ENCODE measurements at regions of chr5 and their contacts with region 1.

Region 1: DNA sequence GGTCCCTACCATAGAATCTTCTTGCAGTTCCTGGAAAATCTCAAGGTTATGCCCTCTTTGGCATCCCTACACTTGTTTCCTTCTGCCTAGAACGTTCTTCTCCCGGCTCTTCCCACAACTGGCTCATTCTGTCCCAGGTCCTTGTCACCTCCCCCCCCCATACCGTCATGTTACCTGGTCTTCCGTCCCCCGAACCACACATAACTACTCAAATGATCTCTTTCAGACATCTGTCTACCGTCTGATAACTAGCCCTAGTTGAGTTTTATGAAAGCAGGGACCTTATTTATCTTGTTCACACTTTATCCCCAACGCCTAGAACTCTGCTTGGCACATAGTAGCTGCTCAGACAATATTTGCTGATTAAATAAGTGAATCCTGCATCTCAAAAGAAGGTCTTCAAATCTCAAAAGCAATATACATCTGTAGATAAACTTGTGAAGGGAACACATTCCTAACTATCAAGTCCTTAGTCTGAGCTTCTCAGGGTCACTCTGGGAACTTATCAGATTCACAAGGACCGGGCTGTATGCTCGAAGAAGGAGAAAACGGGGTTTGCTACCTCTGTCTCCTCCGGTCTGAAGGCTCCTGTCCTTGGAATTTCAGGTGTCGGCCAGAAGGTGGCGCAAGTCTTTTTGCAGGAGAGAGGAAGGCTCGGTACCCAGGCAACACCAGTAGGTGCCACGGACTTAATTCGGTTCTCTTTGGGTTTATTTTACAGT is 30.0 kb downstream of the LCP2 start:
- DNase-seq: peak; percentile 80 to 83 (median 82)
- H3K4me3 ChIP-seq: peak overlapping the region in 1 of 2 donors; percentile 33
- H3K4me3 Mint-ChIP-seq: peak overlapping the region; percentile 41 to 86 (median 75)
- H3K27ac ChIP-seq: peak overlapping the region; percentile 66
- H3K27ac Mint-ChIP-seq: peak overlapping the region; percentile 90 to 100 (median 95)
- H3K4me1 ChIP-seq: peaks cover 94% of the 10 kb centered on the region
- H3K4me1 Mint-ChIP-seq: peaks cover 67 to 92% (median 81%) of the 10 kb centered on the region in 4 donors
- H3K27me3 ChIP-seq: no peaks in the 10 kb centered on the region
- H3K27me3 Mint-ChIP-seq: no peaks in the 10 kb centered on the region

Region 2: GRCh38 chr5:169980418-169981053 is 287.1 kb before region 1 on chr5 and contains the start of gene INSYN2B:
- CTCF ChIA-PET with region 1: no interaction called
- POLR2A ChIA-PET with region 1: no interaction called
- intact Hi-C with region 1: no loop called
- DNase-seq: no peak
- H3K4me3 ChIP-seq: no peak within 1 kb of the TSS
- H3K4me3 Mint-ChIP-seq: no peak within 1 kb of the TSS
- H3K27ac ChIP-seq: no peak within 1 kb of the TSS
- H3K27ac Mint-ChIP-seq: peak within 1 kb of the TSS in 1 of 7 donors; percentile 24
- H3K4me1 ChIP-seq: no peaks in the 10 kb centered on the region
- H3K4me1 Mint-ChIP-seq: peaks cover 0 to 8% (median 1%) of the 10 kb centered on the region in 4 donors
- H3K27me3 ChIP-seq: no peaks in the 10 kb centered on the region
- H3K27me3 Mint-ChIP-seq: no peaks in the 10 kb centered on the region
- total RNA-seq, gene INSYN2B: not detected

Region 3: DNA sequence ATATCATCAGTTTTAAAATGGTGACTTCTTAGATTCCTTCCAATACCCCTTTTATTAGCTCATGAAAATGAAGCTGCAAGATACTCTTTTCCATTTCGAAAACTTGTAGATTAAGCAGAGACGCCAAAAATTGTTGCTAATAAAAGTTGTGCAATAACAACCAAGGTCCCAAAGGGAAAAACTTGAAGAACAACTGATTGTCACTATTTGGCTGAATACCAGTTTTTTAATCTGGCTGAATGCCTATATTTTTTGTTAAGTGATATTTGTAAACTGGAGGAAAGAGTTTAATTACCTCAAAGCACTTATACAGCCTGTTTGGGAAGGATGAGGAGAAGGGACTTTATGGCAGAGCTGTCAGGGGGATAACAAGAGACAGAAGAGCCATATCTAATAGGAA is 20.2 kb before region 1 on chr5:
- CTCF ChIA-PET with region 1: interaction called, 19 read pairs
- POLR2A ChIA-PET with region 1: interaction called, 34 read pairs
- intact Hi-C with region 1: no loop called
- DNase-seq: no peak
- H3K4me3 ChIP-seq: no peak overlapping the region
- H3K4me3 Mint-ChIP-seq: no peak overlapping the region
- H3K27ac ChIP-seq: no peak overlapping the region
- H3K27ac Mint-ChIP-seq: no peak overlapping the region
- H3K4me1 ChIP-seq: peaks cover 9% of the 10 kb centered on the region
- H3K4me1 Mint-ChIP-seq: peaks cover 4 to 16% (median 7%) of the 10 kb centered on the region in 4 donors
- H3K27me3 ChIP-seq: no peaks in the 10 kb centered on the region
- H3K27me3 Mint-ChIP-seq: no peaks in the 10 kb centered on the region

Region 4: DNA sequence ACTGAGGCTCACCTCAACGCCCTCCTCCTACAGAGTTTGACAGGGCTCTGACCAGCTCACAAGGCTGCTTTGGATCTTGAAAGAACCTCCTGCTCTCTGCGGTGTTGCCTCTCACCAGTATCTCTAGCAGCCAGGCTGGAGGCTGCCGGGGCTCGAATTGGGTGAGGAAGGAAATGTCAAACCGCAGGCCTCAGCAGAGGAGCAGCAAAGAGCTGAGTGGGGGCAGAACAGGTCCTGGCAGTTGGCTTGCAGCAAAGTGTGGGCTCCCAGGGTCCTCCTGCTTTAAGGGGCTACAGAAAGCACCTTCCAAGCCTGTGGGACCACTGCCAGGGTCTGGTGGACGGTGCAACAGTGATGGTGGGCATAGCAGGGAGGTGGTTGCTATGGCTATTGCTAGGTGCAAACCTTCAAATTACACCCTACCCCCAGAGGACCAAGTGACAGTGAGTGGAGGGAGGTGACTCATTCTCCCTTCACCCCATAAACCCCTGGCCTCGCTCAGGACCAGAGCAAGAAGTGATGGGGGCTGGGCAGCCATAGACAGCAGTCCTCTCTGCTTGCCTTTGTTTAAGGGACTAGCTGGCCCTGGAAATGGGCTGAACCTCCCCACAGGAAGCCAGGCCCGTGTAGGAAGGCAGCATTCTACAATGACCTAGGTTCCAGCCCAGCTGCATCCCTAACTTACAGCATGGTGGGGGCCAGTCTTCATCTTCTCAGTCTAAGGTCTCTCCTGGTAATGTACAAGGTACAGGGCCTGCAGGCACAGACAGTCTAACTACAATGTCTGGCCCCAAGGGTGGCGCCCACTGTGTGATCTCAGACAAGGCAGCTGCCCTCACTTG is 11.2 kb after region 1 on chr5:
- CTCF ChIA-PET with region 1: interaction called, 137 read pairs
- POLR2A ChIA-PET with region 1: interaction called, 116 read pairs
- intact Hi-C with region 1: loop called (anchors 1 kb)
- DNase-seq: peak; percentile 90 to 96 (median 91)
- H3K4me3 ChIP-seq: peak overlapping the region in 1 of 2 donors; percentile 15
- H3K4me3 Mint-ChIP-seq: peak overlapping the region; percentile 75 to 92 (median 85)
- H3K27ac ChIP-seq: peak overlapping the region; percentile 68
- H3K27ac Mint-ChIP-seq: peak overlapping the region; percentile 91 to 100 (median 96)
- H3K4me1 ChIP-seq: peaks cover 95% of the 10 kb centered on the region
- H3K4me1 Mint-ChIP-seq: peaks cover 83 to 100% (median 93%) of the 10 kb centered on the region in 4 donors
- H3K27me3 ChIP-seq: no peaks in the 10 kb centered on the region
- H3K27me3 Mint-ChIP-seq: no peaks in the 10 kb centered on the region

Region 5: DNA sequence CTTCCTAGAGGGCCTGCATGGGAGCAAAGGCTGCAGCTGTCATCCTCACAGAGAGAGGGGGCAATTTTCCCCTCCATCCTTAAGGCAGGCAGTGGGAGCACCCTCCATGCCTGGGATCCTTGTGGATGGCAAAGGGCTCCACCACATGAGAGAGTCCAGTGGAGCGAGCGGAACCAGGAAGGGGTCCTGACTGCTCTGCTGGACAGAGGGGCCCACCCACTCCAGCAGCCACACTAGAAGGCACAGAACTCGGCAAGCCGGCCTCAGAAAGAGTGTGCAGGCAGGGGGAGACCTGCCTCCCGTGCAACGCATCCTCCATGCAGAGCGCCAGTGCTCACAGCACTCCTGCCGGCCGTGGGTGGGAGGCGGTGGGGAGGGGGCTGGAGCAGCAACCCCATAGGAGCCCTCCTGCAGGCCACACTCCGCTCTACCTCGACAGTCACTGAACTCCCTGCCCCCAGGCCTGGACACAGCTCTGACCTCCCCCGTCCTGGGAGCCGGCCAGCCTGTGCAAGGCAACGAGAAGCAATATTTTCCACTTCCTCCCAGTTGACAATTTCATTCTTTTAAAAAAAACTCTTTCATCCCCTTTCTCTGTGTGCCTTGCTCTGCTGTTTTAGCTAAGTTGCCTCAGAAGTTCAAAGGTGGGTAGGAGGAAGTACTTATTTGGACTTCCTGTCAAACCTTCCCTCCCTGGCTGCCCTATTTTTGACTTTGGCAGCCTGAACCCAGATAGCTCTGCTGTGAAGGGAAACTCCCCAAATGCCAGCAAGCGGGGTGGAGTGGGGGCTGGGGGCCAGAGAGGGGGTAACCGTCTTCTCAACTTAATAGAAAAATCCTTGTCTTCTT is 35.3 kb after region 1 on chr5:
- CTCF ChIA-PET with region 1: interaction called, 384 read pairs
- POLR2A ChIA-PET with region 1: interaction called, 1,265 read pairs
- intact Hi-C with region 1: loop called (anchors 5 kb)
- DNase-seq: peak; percentile 85 to 91 (median 88)
- H3K4me3 ChIP-seq: peak overlapping the region; percentile 50 to 63
- H3K4me3 Mint-ChIP-seq: peak overlapping the region; percentile 77 to 97 (median 88)
- H3K27ac ChIP-seq: peak overlapping the region; percentile 82
- H3K27ac Mint-ChIP-seq: peak overlapping the region; percentile 88 to 99 (median 97)
- H3K4me1 ChIP-seq: peaks cover 69% of the 10 kb centered on the region
- H3K4me1 Mint-ChIP-seq: peaks cover 39 to 87% (median 67%) of the 10 kb centered on the region in 4 donors
- H3K27me3 ChIP-seq: no peaks in the 10 kb centered on the region
- H3K27me3 Mint-ChIP-seq: no peaks in the 10 kb centered on the region

Region 6: GRCh38 chr5:170327168-170327567 is 59.6 kb after region 1 on chr5:
- CTCF ChIA-PET with region 1: interaction called, 195 read pairs
- POLR2A ChIA-PET with region 1: interaction called, 255 read pairs
- intact Hi-C with region 1: loop called (anchors 1 kb)
- DNase-seq: no peak
- H3K4me3 ChIP-seq: no peak overlapping the region
- H3K4me3 Mint-ChIP-seq: no peak overlapping the region
- H3K27ac ChIP-seq: no peak overlapping the region
- H3K27ac Mint-ChIP-seq: no peak overlapping the region
- H3K4me1 ChIP-seq: peaks cover 55% of the 10 kb centered on the region
- H3K4me1 Mint-ChIP-seq: peaks cover 5 to 9% (median 8%) of the 10 kb centered on the region in 4 donors
- H3K27me3 ChIP-seq: no peaks in the 10 kb centered on the region
- H3K27me3 Mint-ChIP-seq: peaks cover 0 to 2% of the 10 kb centered on the region in 2 donors

Measured in CD4-positive, alpha-beta memory T cell (primary cell).